Psoas muscle (tissue), 8 donors: ENCODE measurements at regions of chr17 and their contacts with region 1.

Region 1: GRCh38 chr17:78250891-78251794 is 19.7 kb downstream of the TMEM235 start:
- DNase-seq: peak; percentile 87 to 93
- ATAC-seq: peak; percentile 83 to 88 (median 86)
- H3K4me3 ChIP-seq: peak overlapping the region; percentile 4
- H3K27ac ChIP-seq: no peak overlapping the region
- H3K4me1 ChIP-seq: peaks cover 13% of the 10 kb centered on the region
- H3K27me3 ChIP-seq: no peaks in the 10 kb centered on the region
- CTCF ChIP-seq: peak; percentile 100

Region 2: GRCh38 chr17:78133971-78134898 is 116.9 kb before region 1 on chr17:
- intact Hi-C with region 1: no loop called
- DNase-seq: peak in 1 of 2 donors; percentile 67
- ATAC-seq: peak in 2 of 4 donors; percentile 36 to 40
- H3K4me3 ChIP-seq: no peak overlapping the region
- H3K27ac ChIP-seq: no peak overlapping the region
- H3K4me1 ChIP-seq: no peaks in the 10 kb centered on the region
- H3K27me3 ChIP-seq: peaks cover 0 to 33% (median 7%) of the 10 kb centered on the region in 3 donors
- CTCF ChIP-seq: peak; percentile 44

Region 3: GRCh38 chr17:78186692-78187595 is 64.2 kb before region 1 on chr17 and contains the starts of genes AFMID and TK1:
- intact Hi-C with region 1: loop called in 1 of 2 experiments (anchors 5 kb)
- DNase-seq: peak; percentile 97 to 98
- ATAC-seq: peak; percentile 98 to 99 (median 98)
- H3K4me3 ChIP-seq: peak within 1 kb of the TSS; percentile 65
- H3K27ac ChIP-seq: peak within 1 kb of the TSS; percentile 71
- H3K4me1 ChIP-seq: peaks cover 8% of the 10 kb centered on the region
- H3K27me3 ChIP-seq: no peaks in the 10 kb centered on the region
- CTCF ChIP-seq: peak; percentile 76
- total RNA-seq, gene AFMID: 7.4 to 20.8 (median 12.1) TPM
- total RNA-seq, gene TK1: 0.68 to 3.1 (median 2.3) TPM